Right ventricle myocardium inferior (tissue), 1 donor: ENCODE measurements at regions of chr6 and their contacts with region 1.

Region 1: GRCh38 chr6:112087136-112087911 is at the starts of genes FAM229B and TUBE1:
- DNase-seq: peak; percentile 95
- ATAC-seq: peak; percentile 96
- total RNA-seq, gene FAM229B: 75.1 TPM
- total RNA-seq, gene TUBE1: 24.0 TPM

Region 2: DNA sequence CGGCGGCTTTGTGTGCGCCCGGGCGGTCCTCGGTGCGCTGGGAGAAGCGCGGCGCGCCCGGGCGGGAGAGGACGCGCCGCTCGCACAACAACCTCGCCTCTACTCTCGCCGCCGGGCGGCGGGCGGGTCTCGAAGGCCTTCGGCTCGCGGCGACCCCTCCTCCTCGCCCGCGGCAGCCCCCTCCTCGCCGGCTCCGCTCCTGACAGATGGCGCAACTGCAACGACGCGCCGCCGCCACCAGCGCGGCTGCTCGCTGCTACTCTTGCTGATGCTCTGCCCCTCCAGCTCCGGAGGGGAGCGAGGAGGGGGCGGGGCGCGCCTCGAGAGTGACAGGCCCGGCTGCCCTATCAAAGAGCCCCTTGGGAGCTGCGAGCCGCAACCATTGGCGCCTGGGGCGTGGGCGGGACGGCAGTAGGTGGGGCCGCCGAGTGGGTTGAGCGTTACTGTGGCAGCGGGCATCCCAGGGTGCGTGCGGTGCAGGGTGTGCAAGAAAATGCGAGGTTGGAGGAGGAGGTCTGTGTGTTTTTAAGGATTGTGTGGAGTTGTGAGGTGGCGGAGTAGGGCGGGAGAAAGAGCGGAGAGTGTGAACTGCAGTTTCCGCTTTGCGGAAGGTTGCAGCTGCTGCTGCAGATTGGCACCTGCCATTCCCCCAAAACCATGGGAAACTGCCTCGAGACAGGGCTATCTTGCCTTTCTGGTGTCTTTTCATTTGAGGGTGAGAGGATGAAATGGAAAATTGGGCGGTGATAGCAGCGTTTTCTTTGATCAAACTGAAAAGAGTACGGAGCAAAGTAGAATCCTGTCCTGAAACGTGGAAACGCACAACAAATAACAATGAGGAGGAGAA is 213.9 kb before region 1 on chr6 and contains the start of gene FYN:
- intact Hi-C with region 1: no loop called
- DNase-seq: peak; percentile 99
- ATAC-seq: peak; percentile 99
- total RNA-seq, gene FYN: 50.4 TPM

Region 3: DNA sequence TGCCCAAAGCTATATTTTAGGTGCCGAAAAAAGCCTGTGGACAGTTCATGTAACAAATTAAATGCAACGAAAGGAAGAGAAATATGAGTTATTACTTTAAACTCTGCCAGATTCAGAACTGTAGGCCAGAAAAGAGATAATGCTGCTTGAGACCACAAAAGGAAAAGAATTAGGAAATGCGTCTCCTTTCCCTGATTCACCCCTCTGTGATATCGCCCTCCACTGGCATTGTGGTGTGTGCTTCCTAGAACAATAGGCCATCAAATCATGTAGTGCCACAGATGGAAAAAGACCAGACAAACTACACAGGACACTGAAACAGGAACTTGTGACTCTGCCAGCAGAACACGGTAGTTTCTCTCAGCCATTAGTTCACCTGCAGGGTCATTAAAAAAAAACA is 181.8 kb after region 1 on chr6:
- intact Hi-C with region 1: loop called (anchors 5 kb)
- DNase-seq: no peak
- ATAC-seq: peak; percentile 40